Calu3 (cell line): ENCODE measurements at regions of chr11 and their contacts with region 1.

Region 1: GRCh38 chr11:119196833-119197483 is 9.2 kb upstream of the CBL start:
- DNase-seq: peak; percentile 71
- H3K4me3 Mint-ChIP-seq: no peak overlapping the region
- H3K27ac Mint-ChIP-seq: no peak overlapping the region
- H3K4me1 Mint-ChIP-seq: peaks cover 9% of the 10 kb centered on the region
- H3K27me3 Mint-ChIP-seq: peaks cover 12% of the 10 kb centered on the region
- CTCF ChIP-seq: peak; percentile 40

Region 2: DNA sequence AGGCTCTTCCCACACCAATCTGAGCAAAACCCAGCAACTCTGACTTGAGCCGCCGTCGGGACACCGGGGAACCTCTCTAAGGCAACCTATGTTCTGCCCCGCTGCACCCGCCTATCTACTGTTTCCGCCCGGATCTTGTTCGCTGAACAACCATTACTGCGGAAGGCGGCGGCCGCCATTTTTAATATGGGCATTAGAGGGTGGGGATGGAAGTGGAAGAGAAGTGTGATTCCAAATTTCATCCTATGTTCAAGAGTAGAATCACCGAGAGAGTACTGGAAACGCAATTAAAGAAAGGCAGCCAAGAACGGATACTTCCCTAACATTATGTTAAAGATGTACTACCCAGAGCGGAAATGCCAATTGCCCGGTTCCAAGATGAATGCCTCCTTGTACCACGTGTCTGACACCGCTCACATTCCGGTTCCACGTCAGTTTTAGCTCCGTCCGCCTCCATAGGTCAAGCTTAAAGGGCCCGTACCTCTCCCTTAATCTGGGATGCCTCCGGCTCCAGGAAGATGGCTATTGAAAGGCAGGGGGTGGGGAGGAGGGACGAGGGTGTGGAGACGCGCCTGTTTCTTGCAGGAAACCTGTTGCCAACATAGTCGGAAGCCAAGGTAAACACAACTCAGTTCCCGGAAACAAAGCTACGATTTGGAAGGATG is 95.1 kb before region 1 on chr11 and contains the start of gene DPAGT1:
- CTCF ChIA-PET with region 1: interaction called, 4 read pairs
- intact Hi-C with region 1: loop called (anchors 5 kb)
- DNase-seq: peak; percentile 80
- H3K4me3 Mint-ChIP-seq: peak within 1 kb of the TSS; percentile 88
- H3K27ac Mint-ChIP-seq: peak within 1 kb of the TSS; percentile 98
- H3K4me1 Mint-ChIP-seq: peaks cover 9% of the 10 kb centered on the region
- H3K27me3 Mint-ChIP-seq: no peaks in the 10 kb centered on the region
- CTCF ChIP-seq: no peak
- total RNA-seq, gene DPAGT1: 46.7 and 47.6 TPM in 2 replicates

Region 3: GRCh38 chr11:119121008-119121810 is 75.7 kb before region 1 on chr11 and contains the start of gene HINFP:
- CTCF ChIA-PET with region 1: no interaction called
- intact Hi-C with region 1: no loop called
- DNase-seq: peak; percentile 96
- H3K4me3 Mint-ChIP-seq: peak within 1 kb of the TSS; percentile 93
- H3K27ac Mint-ChIP-seq: peak within 1 kb of the TSS; percentile 89
- H3K4me1 Mint-ChIP-seq: peaks cover 24% of the 10 kb centered on the region
- H3K27me3 Mint-ChIP-seq: no peaks in the 10 kb centered on the region
- CTCF ChIP-seq: no peak
- total RNA-seq, gene HINFP: 21.8 and 22.6 TPM in 2 replicates

Region 4: DNA sequence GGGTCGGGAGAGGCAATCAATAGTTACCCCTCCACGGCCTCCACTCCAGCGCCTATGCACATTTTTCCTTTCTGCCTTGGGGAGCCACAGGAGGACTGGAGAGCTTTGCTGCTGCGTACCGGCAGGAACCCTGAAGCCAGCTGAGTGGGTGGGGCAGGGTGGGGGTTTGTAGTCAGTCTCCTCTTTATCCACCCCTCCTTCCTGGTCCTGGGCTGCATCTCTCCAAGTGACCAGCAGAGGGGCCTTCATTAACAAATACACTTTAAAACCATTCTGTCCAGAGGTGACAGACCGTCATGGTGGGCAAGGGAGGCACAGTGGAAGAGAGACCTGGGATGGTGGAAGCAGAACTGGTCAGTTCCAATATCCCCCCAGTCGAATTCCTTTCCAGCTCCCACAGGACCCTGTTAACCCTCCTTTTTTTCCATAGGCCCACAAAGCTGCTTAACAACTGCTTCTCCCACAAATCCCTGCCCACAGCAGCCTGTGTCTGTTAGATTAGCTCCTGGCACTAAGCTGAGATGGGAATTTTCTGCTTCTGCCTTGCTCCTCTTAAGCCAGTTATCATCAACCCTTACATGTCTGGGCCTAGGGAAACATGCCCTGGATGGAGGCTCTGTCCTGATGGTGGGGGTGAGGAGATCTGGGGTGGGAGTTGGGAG is 52.0 kb before region 1 on chr11:
- CTCF ChIA-PET with region 1: no interaction called
- intact Hi-C with region 1: loop called (anchors 2 kb)
- DNase-seq: peak; percentile 59
- H3K4me3 Mint-ChIP-seq: no peak overlapping the region
- H3K27ac Mint-ChIP-seq: no peak overlapping the region
- H3K4me1 Mint-ChIP-seq: no peaks in the 10 kb centered on the region
- H3K27me3 Mint-ChIP-seq: peaks cover 34% of the 10 kb centered on the region
- CTCF ChIP-seq: peak; percentile 40

Region 5: DNA sequence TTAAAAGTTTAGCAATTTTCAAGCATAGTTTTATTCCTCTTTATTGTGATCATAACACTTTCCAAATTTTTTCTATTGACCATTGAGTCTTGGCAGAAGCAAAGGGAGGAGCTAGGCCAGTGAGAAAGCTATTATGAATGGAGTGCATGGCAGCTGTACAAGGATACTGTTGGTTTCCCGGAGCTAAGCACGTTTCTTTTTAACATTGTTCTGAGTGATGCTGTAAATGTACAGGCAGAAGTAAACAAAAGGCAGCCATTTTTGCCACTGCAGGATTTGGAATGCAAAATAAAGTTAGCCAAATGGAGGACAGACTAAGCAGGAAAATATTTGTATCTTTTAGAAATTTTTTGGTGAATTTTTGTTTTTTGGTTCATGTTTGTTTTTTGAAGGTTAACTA is 25.4 kb after region 1 on chr11:
- CTCF ChIA-PET with region 1: no interaction called
- intact Hi-C with region 1: no loop called
- DNase-seq: no peak
- H3K4me3 Mint-ChIP-seq: no peak overlapping the region
- H3K27ac Mint-ChIP-seq: no peak overlapping the region
- H3K4me1 Mint-ChIP-seq: no peaks in the 10 kb centered on the region
- H3K27me3 Mint-ChIP-seq: no peaks in the 10 kb centered on the region
- CTCF ChIP-seq: no peak

Region 6: DNA sequence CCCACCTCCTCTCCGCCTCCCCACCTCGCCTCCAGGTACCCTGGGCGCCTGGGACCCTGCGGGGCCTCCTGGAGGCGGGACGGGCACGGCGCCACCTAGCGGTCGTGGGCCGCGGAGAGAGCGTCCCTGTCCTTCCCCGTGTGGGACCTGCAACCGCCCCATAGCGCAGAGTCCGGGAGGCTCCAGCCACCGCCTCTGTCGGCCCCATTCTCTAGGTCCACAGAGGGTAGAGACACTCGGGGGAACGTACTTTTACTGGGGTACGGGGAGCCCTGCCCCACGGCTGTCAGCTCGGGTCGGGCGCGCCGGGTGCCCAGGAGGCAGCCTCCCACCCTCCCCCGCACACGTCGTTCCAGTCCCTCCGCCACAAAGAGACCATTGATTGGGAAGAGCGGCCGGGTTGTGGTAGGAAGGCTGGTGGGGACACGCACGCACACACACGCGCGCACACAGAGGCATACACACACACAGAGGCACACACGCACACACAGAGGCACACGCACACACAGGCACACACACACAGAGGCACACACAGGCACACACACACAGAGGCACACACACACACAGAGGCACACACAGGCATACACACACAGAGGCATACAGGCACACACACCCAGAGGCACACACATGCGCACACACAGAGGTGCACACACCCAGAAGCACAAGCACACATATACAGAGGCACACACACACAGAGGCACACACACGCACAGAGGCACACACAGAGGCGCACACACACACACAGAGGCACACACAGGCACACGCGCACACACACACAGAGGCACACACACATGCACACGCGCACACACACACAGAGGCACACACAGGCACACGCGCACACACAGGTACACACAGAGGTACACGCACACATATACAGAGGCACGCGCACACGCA is 544.7 kb after region 1 on chr11:
- CTCF ChIA-PET with region 1: no interaction called
- intact Hi-C with region 1: no loop called
- DNase-seq: peak; percentile 48
- H3K4me3 Mint-ChIP-seq: no peak overlapping the region
- H3K27ac Mint-ChIP-seq: no peak overlapping the region
- H3K4me1 Mint-ChIP-seq: no peaks in the 10 kb centered on the region
- H3K27me3 Mint-ChIP-seq: peaks cover 28% of the 10 kb centered on the region
- CTCF ChIP-seq: no peak